ENCODE measurements at regions of chr17 and their contacts with region 1.

Region 1: GRCh38 chr17:77494664-77495435 is 354.1 kb downstream of the SEC14L1 start:
- DNase-seq: peak; percentile 77 to 92
- ATAC-seq: peak; percentile 60 to 83
- H3K4me3 ChIP-seq: no peak overlapping the region
- H3K27ac ChIP-seq: peak overlapping the region in 1 of 2 experiments; percentile 37; a peak in 2 of 6 replicates
- H3K4me1 ChIP-seq: no peaks in the 10 kb centered on the region
- CTCF ChIP-seq: peak; percentile 94
- EP300 ChIP-seq: no peak
- POLR2A ChIP-seq: no peak
- RAD21 ChIP-seq: peak; percentile 97 to 98

Region 2: GRCh38 chr17:77312786-77313599 is 181.9 kb before region 1 on chr17:
- CTCF ChIA-PET with region 1: no interaction called
- POLR2A ChIA-PET with region 1: no interaction called
- DNase-seq: no peak
- ATAC-seq: no peak
- H3K4me3 ChIP-seq: no peak overlapping the region
- H3K27ac ChIP-seq: peak overlapping the region in 1 of 2 experiments; percentile 26; a peak in 1 of 6 replicates
- H3K4me1 ChIP-seq: peaks cover 51% of the 10 kb centered on the region
- CTCF ChIP-seq: no peak
- EP300 ChIP-seq: no peak
- POLR2A ChIP-seq: no peak
- RAD21 ChIP-seq: no peak

Region 3: DNA sequence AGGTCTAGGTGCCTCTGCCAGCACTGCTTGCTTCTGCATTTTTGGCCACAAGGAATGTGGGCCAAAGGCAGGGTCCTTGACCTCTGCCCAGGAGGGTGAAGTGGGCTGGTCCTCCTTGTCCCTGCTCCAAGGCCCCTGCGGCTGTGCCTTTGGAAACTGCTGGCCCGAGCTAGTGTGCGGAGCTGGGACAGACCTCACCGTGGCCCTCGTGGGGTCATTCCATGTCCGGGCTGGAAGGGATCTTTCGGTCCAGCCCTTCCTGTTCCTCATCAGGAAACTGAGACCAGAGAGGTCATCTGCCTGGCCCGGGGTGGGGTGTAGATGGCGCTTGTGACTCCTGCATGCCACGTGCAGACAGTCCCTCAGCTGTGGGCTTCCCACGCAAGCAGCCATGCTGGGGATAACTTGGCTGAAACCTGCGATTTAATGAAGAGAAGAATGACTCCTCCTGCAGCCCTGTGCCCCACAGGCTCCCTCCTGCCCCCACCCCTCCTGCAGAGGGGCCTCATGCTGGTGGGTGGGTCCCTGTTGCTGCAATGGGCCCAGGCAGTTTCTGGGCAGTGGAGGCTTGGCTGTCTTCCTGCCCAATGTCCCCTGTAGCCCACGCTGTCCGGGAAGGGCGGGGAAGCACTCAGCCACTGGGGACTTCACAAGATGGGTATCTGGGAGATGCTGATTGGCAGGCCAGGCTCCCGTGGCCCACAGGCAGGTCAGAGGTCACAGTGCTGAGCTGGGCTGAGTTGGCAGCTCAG is 108.9 kb before region 1 on chr17:
- CTCF ChIA-PET with region 1: interaction called, 11 read pairs
- POLR2A ChIA-PET with region 1: no interaction called
- DNase-seq: no peak
- ATAC-seq: peak in 1 of 2 experiments; percentile 16; a peak in 3 of 6 replicates
- H3K4me3 ChIP-seq: no peak overlapping the region
- H3K27ac ChIP-seq: peak overlapping the region; percentile 39 to 74; a peak in 4 of 6 replicates
- H3K4me1 ChIP-seq: peaks cover 88% of the 10 kb centered on the region
- CTCF ChIP-seq: no peak
- EP300 ChIP-seq: no peak
- POLR2A ChIP-seq: no peak
- RAD21 ChIP-seq: no peak

Region 4: DNA sequence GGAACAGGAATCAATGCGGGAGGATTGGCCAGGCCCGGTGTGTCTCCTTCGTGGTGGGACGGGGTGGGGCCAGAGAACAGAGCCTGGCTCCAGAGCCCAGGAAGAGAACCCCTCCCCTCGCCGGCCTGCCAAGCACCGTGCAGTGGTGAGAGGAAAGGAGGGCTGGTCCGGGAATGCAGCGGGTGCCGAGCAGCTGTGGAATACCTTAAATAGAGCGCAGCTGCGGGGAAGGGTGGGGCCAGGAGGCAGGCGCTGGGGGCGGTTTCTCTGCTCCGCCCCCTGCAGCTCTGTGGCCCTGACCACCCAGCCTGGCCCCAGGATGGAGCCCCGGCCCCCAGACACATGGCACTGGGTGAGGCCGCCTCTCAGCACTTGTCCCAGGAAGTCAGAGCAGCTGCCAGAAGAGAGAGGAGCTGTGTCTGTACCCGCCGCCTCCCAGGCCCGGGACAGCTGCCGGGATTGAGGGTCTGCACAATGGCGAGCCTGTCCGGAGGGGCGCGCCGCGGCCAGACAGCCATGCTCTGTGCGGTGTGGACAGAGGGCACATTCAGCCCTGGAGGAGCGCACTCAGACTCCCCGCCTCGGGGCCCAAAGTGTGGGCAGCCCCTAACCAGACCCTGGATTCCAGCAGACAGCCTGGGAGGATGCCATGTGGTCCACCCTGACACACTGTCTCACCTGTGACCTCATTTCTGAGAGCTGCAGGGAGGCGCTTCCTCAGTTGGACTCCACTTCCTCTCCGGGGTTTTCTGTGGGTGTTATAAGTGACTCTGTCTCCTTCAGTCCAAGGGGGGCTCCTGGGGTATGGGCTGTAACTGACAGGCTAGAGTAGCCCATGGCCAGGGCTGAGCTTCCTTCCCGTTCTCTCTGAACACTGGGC is 85.3 kb before region 1 on chr17:
- CTCF ChIA-PET with region 1: interaction called, 11 read pairs
- POLR2A ChIA-PET with region 1: no interaction called
- DNase-seq: no peak
- ATAC-seq: peak; percentile 8 to 17; a peak in 4 of 6 replicates
- H3K4me3 ChIP-seq: no peak overlapping the region
- H3K27ac ChIP-seq: peak overlapping the region; percentile 53 to 70; a peak in 4 of 6 replicates
- H3K4me1 ChIP-seq: peaks cover 76% of the 10 kb centered on the region
- CTCF ChIP-seq: no peak
- EP300 ChIP-seq: no peak
- POLR2A ChIP-seq: no peak
- RAD21 ChIP-seq: no peak

Region 5: DNA sequence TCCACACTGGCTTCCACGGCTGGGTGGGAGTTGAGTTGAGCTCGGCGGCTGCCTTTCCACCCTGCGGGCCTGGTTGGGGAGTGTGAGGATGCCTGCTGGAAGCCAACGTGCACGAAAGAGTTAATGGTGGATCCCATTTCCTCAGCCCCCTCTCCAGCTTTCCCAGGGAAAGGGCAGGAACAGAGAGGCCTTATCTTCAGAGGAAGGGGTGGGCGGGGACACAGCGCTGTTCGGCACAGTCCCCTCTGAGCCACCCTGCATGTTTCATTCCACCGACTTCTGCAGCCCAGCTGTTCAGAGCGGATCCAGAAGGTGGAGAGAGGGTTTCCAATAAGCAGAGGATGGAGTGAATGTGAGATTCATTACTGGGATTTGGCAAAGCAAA is 58.8 kb before region 1 on chr17:
- CTCF ChIA-PET with region 1: interaction called, 141 read pairs
- POLR2A ChIA-PET with region 1: no interaction called
- DNase-seq: no peak
- ATAC-seq: no peak
- H3K4me3 ChIP-seq: no peak overlapping the region
- H3K27ac ChIP-seq: no peak overlapping the region; a peak in 1 of 6 replicates
- H3K4me1 ChIP-seq: peaks cover 8% of the 10 kb centered on the region; the same call in 2 of the 3 replicates
- CTCF ChIP-seq: no peak
- EP300 ChIP-seq: no peak
- POLR2A ChIP-seq: no peak
- RAD21 ChIP-seq: no peak

Region 6: GRCh38 chr17:77476931-77477877 is 17.6 kb before region 1 on chr17:
- CTCF ChIA-PET with region 1: interaction called, 25 read pairs
- POLR2A ChIA-PET with region 1: no interaction called
- DNase-seq: no peak
- ATAC-seq: no peak
- H3K4me3 ChIP-seq: no peak overlapping the region
- H3K27ac ChIP-seq: no peak overlapping the region
- H3K4me1 ChIP-seq: peaks cover 46% of the 10 kb centered on the region
- CTCF ChIP-seq: no peak
- EP300 ChIP-seq: no peak
- POLR2A ChIP-seq: no peak
- RAD21 ChIP-seq: no peak

Region 7: DNA sequence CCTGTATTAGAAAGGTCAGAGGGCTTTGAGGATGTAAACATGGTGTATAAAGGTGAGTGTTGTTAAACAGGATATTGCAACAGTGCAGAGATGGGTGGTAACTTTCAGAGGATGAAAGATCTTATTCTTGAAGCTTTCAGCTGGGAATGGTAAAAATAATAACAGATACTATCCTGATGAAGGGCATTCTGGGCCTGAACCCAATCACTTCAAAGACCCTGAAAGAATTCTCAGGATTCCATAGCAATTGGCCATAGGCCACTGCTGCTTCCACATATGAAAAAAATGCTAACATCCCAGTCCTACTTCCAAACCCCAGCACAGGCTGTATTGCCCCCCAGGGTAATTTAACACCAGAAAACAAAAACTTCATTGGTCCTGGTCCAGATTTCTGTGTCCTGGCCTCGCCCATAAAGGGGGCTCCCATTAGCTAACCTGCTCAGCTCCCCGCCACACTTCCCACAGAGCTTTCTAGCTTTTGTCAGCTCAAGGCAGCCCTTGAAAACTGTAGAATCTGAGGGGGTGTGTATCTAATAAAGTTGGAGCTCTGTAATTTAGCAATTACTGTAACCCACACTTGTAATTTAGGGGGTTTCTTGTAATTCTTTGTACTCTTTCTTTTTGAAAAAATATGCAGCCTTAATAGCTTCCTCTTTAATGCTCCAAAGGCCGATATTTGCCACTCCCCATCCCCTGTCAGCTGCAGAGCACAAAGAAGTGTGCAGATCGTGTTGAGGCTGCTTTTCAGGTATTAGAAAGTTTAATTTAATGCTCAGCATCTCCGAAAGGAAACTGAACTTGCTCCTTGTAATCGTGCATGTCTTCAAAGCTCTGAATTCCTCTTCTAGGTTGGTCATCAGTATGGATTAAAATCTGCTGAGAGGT is 17.5 kb after region 1 on chr17:
- CTCF ChIA-PET with region 1: interaction called, 64 read pairs
- POLR2A ChIA-PET with region 1: no interaction called
- DNase-seq: no peak
- ATAC-seq: no peak
- H3K4me3 ChIP-seq: no peak overlapping the region
- H3K27ac ChIP-seq: no peak overlapping the region
- H3K4me1 ChIP-seq: peaks cover 13% of the 10 kb centered on the region
- CTCF ChIP-seq: no peak
- EP300 ChIP-seq: no peak
- POLR2A ChIP-seq: no peak
- RAD21 ChIP-seq: no peak